Activated CD4-positive, alpha-beta T cell treated with anti-CD3 and anti-CD28 coated beads for 36 hours (primary cell): ENCODE measurements at regions of chr17 and their contacts with region 1.

Region 1: GRCh38 chr17:80101011-80101945 is at the start of gene GAA:
- DNase-seq: peak; percentile 93
- ATAC-seq: peak; percentile 89
- H3K4me3 Mint-ChIP-seq: peak within 1 kb of the TSS; percentile 84
- H3K27ac Mint-ChIP-seq: peak within 1 kb of the TSS; percentile 68
- H3K4me1 Mint-ChIP-seq: peaks cover 26% of the 10 kb centered on the region
- H3K27me3 Mint-ChIP-seq: no peaks in the 10 kb centered on the region
- total RNA-seq, gene GAA: 28.4 to 32.8 TPM

Region 2: DNA sequence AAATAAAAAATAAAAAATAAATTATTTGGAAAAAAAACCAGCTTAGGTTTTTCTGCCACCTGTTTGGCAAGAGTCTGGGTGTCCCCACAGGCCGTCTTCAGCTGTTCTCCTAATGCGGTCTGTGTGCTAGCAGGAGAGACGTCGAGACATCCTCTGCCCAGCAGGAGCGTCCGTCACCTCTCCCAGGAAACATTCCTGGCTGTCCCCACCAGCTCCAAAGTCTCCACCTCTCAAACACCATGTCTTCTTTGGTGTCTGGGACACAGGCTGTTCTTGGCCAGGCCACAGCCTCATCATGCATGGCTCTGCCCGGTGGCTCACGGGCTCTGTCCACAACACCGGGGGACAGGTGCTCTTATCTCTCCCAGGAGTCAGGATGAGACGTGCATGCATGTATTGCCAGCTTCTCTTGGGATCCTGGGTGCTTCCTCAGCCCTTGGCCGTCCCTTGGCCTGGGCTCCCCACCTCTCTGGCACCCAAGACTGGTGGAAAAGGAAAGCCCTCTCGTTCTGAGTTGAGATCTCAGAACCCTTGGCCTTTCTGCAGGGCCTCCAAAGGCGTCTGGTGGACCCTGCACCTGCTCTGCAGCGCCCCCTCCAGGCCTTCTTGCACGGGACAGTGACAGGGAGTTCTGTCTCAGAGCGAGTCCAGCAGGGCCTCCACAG is 177.2 kb before region 1 on chr17:
- CTCF ChIA-PET with region 1: no interaction called
- POLR2A ChIA-PET with region 1: no interaction called
- intact Hi-C with region 1: no loop called
- DNase-seq: peak; percentile 82
- ATAC-seq: peak; percentile 90
- H3K4me3 Mint-ChIP-seq: no peak overlapping the region
- H3K27ac Mint-ChIP-seq: no peak overlapping the region
- H3K4me1 Mint-ChIP-seq: peaks cover 4% of the 10 kb centered on the region
- H3K27me3 Mint-ChIP-seq: peaks cover 12% of the 10 kb centered on the region

Region 3: GRCh38 chr17:80035943-80036714 is 65.1 kb before region 1 on chr17 and contains the start of gene CCDC40:
- CTCF ChIA-PET with region 1: interaction called, 7 read pairs
- POLR2A ChIA-PET with region 1: no interaction called
- intact Hi-C with region 1: loop called (anchors 1 to 5 kb)
- DNase-seq: peak; percentile 82
- ATAC-seq: peak; percentile 72
- H3K4me3 Mint-ChIP-seq: peak within 1 kb of the TSS; percentile 82
- H3K27ac Mint-ChIP-seq: no peak within 1 kb of the TSS
- H3K4me1 Mint-ChIP-seq: peaks cover 7% of the 10 kb centered on the region
- H3K27me3 Mint-ChIP-seq: peaks cover 12% of the 10 kb centered on the region
- total RNA-seq, gene CCDC40: 0.56 to 0.57 TPM

Region 4: DNA sequence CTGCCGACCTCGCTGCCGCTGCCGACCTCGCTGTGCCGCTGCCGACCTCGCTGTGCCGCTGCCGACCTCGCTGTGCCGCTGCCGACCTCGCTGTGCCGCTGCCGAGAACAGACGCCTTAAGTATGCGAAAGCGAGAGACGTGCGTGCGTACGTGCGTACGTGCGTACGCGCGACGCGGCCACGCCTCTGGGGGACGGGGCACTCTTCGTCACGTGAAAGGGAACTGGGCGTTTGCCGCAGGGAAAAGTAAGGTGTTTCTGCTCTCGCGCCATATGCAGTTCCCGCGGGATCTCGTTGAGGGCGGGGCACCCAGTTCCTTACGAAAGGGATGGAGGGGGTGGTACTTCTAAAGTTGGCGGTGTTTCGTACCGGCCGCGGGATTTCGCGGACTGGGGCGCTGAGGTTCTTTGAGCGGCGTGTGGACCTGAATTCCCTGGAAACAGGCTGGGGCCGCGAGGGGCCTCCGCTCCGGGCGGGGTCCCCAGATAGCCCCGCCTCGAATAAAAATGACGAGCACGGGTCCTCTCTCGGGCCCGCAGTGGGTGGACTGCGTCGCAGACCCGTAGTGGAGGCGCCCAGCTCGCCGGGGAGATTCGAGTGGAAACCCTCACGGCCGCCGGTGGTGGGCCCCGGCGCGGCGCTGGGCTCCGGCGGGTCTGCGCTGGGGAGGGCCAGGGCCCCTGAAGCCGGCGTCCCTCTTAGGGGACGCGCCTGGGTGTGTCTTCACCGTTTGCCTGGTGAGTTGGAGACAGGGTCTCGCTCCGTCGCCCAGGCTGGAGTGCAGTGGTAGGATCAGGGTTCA is 46.0 kb after region 1 on chr17 and contains the start of gene EIF4A3:
- CTCF ChIA-PET with region 1: interaction called, 7 read pairs
- POLR2A ChIA-PET with region 1: interaction called, 6 read pairs
- intact Hi-C with region 1: loop called (anchors 1 to 5 kb)
- DNase-seq: peak; percentile 99
- ATAC-seq: peak; percentile 91
- H3K4me3 Mint-ChIP-seq: peak within 1 kb of the TSS; percentile 77
- H3K27ac Mint-ChIP-seq: peak within 1 kb of the TSS; percentile 93
- H3K4me1 Mint-ChIP-seq: peaks cover 43% of the 10 kb centered on the region
- H3K27me3 Mint-ChIP-seq: no peaks in the 10 kb centered on the region
- total RNA-seq, gene EIF4A3: 103 to 141 TPM

Region 5: GRCh38 chr17:80254396-80255251 is 153.3 kb after region 1 on chr17:
- CTCF ChIA-PET with region 1: no interaction called
- POLR2A ChIA-PET with region 1: no interaction called
- intact Hi-C with region 1: loop called (anchors 1 to 2 kb)
- DNase-seq: peak; percentile 83
- ATAC-seq: peak; percentile 62
- H3K4me3 Mint-ChIP-seq: peak overlapping the region; percentile 64
- H3K27ac Mint-ChIP-seq: peak overlapping the region; percentile 97
- H3K4me1 Mint-ChIP-seq: peaks cover 71% of the 10 kb centered on the region
- H3K27me3 Mint-ChIP-seq: no peaks in the 10 kb centered on the region

Region 6: DNA sequence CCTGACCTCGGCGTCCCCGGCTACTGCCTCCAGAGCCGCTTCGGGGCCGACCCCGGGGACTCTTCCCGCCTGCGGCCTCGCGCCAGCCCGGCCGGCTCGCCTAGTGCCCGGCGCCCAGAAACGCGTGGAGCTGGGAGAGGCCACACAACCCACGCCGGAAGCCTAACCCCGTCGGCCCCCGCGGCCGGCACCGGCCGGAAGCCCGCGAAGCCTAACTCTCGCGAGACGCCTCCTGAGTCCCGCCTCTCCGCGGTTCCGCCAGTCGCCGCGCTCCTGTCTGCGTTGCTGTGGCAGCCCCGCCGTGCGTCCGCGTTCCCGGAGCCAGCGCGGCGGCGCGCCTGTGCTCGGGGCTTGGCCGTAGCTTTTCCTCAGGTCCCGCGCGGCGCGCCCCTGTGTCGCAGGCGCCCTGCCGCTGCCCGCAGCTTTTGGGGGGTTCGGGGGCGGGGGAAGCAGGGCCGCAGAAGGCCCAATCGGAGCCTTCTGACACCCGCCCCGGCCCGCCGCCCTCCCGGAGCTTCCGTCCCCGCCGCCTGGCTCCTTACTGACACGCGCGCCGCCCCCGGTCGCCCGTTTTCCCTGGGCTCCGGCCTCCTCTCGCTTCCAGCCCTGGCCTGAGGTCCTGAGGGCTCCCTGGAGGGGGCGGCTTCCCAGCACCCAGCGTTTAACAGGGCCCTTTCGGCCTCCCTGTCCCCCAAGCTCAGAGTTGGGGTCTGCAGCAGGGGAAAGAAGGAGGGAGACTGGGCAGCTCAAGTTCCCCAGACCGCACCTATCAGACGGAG is 353.5 kb after region 1 on chr17:
- CTCF ChIA-PET with region 1: no interaction called
- POLR2A ChIA-PET with region 1: no interaction called
- intact Hi-C with region 1: loop called in 1 of 2 experiments (anchors 1 kb)
- DNase-seq: peak; percentile 98
- ATAC-seq: peak; percentile 93
- H3K4me3 Mint-ChIP-seq: peak overlapping the region; percentile 99
- H3K27ac Mint-ChIP-seq: peak overlapping the region; percentile 94
- H3K4me1 Mint-ChIP-seq: peaks cover 23% of the 10 kb centered on the region
- H3K27me3 Mint-ChIP-seq: peaks cover 13% of the 10 kb centered on the region

Region 7: DNA sequence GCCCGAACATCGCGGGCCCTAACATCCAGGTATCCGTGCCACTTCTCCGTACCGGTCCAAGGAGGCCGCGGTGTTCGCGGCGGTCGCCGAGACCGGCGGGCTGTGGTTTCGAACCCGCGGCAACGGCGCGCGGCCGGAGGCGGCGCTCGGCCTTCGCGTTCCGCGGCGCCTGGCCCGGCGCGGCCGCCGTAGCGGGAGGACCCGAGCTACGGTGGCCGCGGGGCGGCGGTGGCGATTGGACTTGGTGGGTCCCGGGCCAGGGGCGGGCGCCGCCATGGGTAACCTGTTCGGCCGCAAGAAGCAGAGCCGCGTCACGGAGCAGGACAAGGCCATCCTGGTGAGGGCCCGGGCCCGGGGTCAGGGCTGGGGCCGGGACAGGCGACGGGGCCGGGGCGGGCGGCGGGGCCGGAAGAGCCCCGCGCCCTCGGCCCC is 890.4 kb after region 1 on chr17 and contains the start of gene CHMP6:
- CTCF ChIA-PET with region 1: no interaction called
- POLR2A ChIA-PET with region 1: no interaction called
- intact Hi-C with region 1: loop called in 1 of 2 experiments (anchors 1 kb)
- DNase-seq: peak; percentile 83
- ATAC-seq: peak; percentile 49
- H3K4me3 Mint-ChIP-seq: peak within 1 kb of the TSS; percentile 69
- H3K27ac Mint-ChIP-seq: peak within 1 kb of the TSS; percentile 74
- H3K4me1 Mint-ChIP-seq: peaks cover 21% of the 10 kb centered on the region
- H3K27me3 Mint-ChIP-seq: peaks cover 3% of the 10 kb centered on the region
- total RNA-seq, gene CHMP6: 15.9 to 19.4 TPM